ENCODE measurements at regions of chr19 and their contacts with region 1.

Region 1: GRCh38 chr19:18846862-18847548 is 15.2 kb downstream of the UPF1 start:
- DNase-seq: peak; percentile 88
- H3K4me3 ChIP-seq: peak overlapping the region in 1 of 2 experiments; percentile 10; a peak in 2 of 4 replicates
- H3K27ac ChIP-seq: peak overlapping the region; percentile 63 to 98; a peak in 3 of 4 replicates
- H3K4me1 ChIP-seq: peaks cover 24 to 82% of the 10 kb centered on the region in 2 experiments
- H3K27me3 ChIP-seq: no peaks in the 10 kb centered on the region
- CTCF ChIP-seq: peak; percentile 94
- EP300 ChIP-seq: no peak
- RAD21 ChIP-seq: peak; percentile 88

Region 2: DNA sequence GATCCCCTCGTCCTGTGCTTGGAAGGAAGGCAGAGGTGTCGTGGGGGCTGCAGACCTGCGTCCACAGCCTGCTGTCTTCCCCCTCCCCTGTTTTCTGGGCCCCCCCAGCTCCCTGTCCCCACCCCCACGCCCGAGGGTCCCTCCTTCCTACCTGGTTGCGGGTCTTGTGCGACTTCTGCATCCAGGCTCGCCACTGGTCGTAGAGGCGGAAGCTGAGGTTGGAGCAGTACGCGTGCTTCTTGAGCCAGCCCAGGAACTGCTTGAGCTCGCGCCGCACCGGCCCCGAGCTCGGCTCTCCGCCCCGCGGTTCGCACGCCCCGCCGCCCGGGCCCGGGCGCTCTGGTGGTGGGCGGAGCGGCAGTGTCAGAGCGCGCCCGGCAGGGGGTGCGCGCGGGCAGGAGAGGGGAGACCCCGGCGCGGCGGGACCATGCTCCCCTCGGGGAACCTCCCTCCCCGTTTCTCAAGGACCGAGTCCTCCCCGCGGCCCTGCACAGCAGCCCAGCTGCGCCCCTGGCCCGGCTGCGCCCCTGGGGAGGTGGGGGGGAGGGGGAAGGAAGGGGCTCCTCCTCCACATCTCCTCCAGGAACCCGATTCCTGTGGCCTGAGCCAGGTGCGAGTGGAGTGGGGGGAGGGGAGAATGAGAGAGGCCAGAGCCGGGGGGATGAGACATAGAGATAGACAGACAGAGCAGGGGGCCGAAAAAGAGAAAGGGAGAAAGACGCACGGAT is 252.7 kb before region 1 on chr19:
- CTCF ChIA-PET with region 1: interaction called, 234 read pairs
- POLR2A ChIA-PET with region 1: interaction called, 14 read pairs
- DNase-seq: peak; percentile 96
- H3K4me3 ChIP-seq: peak overlapping the region; percentile 32 to 46; a peak in 3 of 4 replicates
- H3K27ac ChIP-seq: no peak overlapping the region
- H3K4me1 ChIP-seq: peaks cover 6 to 36% of the 10 kb centered on the region in 2 experiments; a peak in 2 of 4 replicates
- H3K27me3 ChIP-seq: no peaks in the 10 kb centered on the region
- CTCF ChIP-seq: peak; percentile 75
- EP300 ChIP-seq: no peak
- RAD21 ChIP-seq: peak; percentile 75

Region 3: GRCh38 chr19:18742838-18743783 is 103.9 kb before region 1 on chr19:
- CTCF ChIA-PET with region 1: interaction called, 24 read pairs
- POLR2A ChIA-PET with region 1: interaction called, 4 read pairs
- DNase-seq: peak; percentile 92
- H3K4me3 ChIP-seq: no peak overlapping the region
- H3K27ac ChIP-seq: peak overlapping the region in 1 of 2 experiments; percentile 96; a peak in 2 of 4 replicates
- H3K4me1 ChIP-seq: peaks cover 0 to 67% of the 10 kb centered on the region in 2 experiments; a peak in 1 of 4 replicates
- H3K27me3 ChIP-seq: no peaks in the 10 kb centered on the region
- CTCF ChIP-seq: no peak
- EP300 ChIP-seq: peak in 1 of 2 experiments; percentile 80; a peak in 2 of 4 replicates
- RAD21 ChIP-seq: peak; percentile 35

Region 4: GRCh38 chr19:18785179-18786128 is 61.6 kb before region 1 on chr19:
- CTCF ChIA-PET with region 1: interaction called, 14 read pairs
- POLR2A ChIA-PET with region 1: no interaction called
- DNase-seq: peak; percentile 100
- H3K4me3 ChIP-seq: peak overlapping the region; percentile 12 to 35; a peak in 2 of 4 replicates
- H3K27ac ChIP-seq: no peak overlapping the region; a peak in 1 of 4 replicates
- H3K4me1 ChIP-seq: peaks cover 0 to 20% of the 10 kb centered on the region in 2 experiments; a peak in 1 of 4 replicates
- H3K27me3 ChIP-seq: peaks cover 37% of the 10 kb centered on the region
- CTCF ChIP-seq: no peak
- EP300 ChIP-seq: no peak
- RAD21 ChIP-seq: no peak

Region 5: DNA sequence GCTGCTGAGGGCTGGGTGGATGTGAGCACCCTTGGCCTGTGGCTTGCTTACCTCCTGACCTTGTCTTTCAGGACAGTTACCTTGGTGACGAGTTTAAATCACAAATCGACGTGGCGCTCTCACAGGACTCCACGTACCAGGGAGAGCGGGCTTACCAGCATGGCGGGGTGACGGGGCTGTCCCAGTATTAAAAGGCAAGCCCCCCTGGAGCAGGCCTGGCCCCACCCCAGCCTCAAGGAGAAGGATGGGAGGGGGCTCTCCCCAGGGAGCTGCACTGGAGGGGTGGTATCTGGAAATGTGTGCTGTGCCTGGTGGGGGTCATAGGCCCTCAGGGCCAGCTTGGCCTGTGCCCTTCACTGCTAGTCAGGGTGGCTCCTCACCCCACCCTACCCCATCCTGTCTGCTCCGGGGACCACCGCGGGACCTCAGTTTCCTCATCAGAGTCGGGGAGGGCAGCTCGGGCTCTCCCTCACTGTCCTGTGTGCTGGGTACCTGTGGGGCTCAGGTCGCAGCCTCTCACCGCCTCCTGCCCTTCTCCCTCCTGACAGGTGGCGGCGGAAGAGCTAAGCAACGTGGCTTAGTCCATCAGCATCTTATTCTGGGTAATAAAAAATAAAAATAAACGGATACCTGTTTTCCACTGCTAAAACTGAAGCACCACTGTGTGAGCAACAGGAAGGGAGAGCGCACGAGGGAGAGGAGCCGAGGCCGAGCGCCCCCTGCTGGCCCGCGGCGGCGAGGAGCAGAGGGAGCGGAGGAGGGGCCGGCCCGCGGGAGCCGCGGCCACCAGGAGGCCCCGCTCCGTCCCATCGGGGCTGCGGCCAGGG is 19.2 kb after region 1 on chr19:
- CTCF ChIA-PET with region 1: interaction called, 201 read pairs
- POLR2A ChIA-PET with region 1: no interaction called
- DNase-seq: peak; percentile 98
- H3K4me3 ChIP-seq: peak overlapping the region in 1 of 2 experiments; percentile 53; a peak in 1 of 4 replicates
- H3K27ac ChIP-seq: no peak overlapping the region
- H3K4me1 ChIP-seq: no peaks in the 10 kb centered on the region
- H3K27me3 ChIP-seq: no peaks in the 10 kb centered on the region
- CTCF ChIP-seq: peak; percentile 99
- EP300 ChIP-seq: no peak
- RAD21 ChIP-seq: peak; percentile 74

Region 6: GRCh38 chr19:18895038-18895823 is 48.2 kb after region 1 on chr19:
- CTCF ChIA-PET with region 1: interaction called, 18 read pairs
- POLR2A ChIA-PET with region 1: no interaction called
- DNase-seq: peak; percentile 95
- H3K4me3 ChIP-seq: peak overlapping the region; percentile 61 to 72
- H3K27ac ChIP-seq: peak overlapping the region in 1 of 2 experiments; percentile 65; a peak in 1 of 4 replicates
- H3K4me1 ChIP-seq: peaks cover 0 to 24% of the 10 kb centered on the region in 2 experiments; a peak in 1 of 4 replicates
- H3K27me3 ChIP-seq: no peaks in the 10 kb centered on the region
- CTCF ChIP-seq: peak; percentile 53
- EP300 ChIP-seq: no peak
- RAD21 ChIP-seq: peak; percentile 71

Region 7: DNA sequence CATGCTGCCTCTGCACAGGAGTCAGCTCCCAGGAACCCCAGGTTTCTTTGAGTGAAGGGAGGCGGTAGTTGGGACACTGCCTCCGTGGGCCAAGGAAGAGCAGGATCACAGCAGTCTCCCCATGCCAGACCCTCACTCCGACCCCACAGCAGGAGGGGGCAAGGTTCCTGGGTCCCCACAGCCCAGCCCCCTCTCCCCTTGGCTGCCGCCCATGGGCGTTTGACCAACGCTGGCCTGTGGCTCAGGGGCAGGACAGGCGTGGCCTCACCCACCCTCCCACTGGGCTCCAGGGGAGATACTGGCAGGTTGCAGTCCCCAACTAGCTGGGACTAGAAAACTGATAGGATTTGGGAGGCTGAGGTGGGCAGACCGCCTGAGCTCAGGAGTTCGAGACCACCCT is 63.0 kb after region 1 on chr19:
- CTCF ChIA-PET with region 1: no interaction called
- POLR2A ChIA-PET with region 1: no interaction called
- DNase-seq: no peak
- H3K4me3 ChIP-seq: no peak overlapping the region
- H3K27ac ChIP-seq: no peak overlapping the region
- H3K4me1 ChIP-seq: no peaks in the 10 kb centered on the region
- H3K27me3 ChIP-seq: no peaks in the 10 kb centered on the region
- CTCF ChIP-seq: no peak
- EP300 ChIP-seq: no peak
- RAD21 ChIP-seq: no peak

Measured in SK-N-SH (cell line).